Mammary epithelial cell (primary cell): ENCODE measurements at regions of chr5 and their contacts with region 1.

Region 1: DNA sequence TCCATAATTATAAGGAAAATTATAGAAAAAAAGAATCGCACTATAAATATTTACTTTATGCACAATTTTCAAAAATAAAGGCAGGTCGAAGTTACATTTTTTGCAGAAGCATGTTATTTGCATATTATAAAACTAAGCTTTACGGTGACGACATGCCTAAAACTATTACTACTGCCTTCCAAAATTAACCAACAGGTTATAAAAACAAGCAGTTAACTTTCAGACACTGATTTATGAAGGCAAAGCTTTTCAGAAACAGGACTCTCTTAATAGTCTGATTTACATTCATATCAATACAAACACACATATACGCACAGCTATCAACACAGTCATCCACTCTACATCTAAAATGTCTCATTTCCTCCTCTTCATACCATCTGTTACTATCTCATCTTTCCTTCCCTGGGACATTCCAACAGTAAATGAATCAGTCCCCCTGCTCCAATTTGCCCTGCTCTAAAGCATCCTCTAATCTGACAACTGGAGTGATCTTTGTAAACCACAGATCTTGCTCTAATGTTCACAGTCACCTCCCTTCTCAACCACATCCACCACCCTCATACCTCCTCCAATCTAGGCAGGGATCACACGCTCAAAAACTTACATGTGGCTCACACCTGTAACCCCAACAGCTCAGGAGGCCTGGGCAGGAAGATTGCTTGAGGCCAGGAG is 21.6 kb downstream of the FBXW11 start:
- DNase-seq: peak; percentile 89
- H3K4me3 ChIP-seq: no peak overlapping the region
- H3K27ac ChIP-seq: no peak overlapping the region
- H3K4me1 ChIP-seq: peaks cover 11% of the 10 kb centered on the region
- H3K27me3 ChIP-seq: no peaks in the 10 kb centered on the region
- CTCF ChIP-seq: no peak

Region 2: GRCh38 chr5:171924493-171925122 is 60.3 kb before region 1 on chr5:
- CTCF ChIA-PET with region 1: no interaction called
- dilution Hi-C with region 1: loop called (anchors 5 kb)
- in situ Hi-C with region 1: no loop called
- intact Hi-C with region 1: no loop called
- DNase-seq: no peak
- H3K4me3 ChIP-seq: peak overlapping the region in 2 of 3 experiments; percentile 11
- H3K27ac ChIP-seq: no peak overlapping the region
- H3K4me1 ChIP-seq: peaks cover 11% of the 10 kb centered on the region
- H3K27me3 ChIP-seq: no peaks in the 10 kb centered on the region
- CTCF ChIP-seq: no peak

Region 3: GRCh38 chr5:171946000-171946774 is 38.7 kb before region 1 on chr5:
- CTCF ChIA-PET with region 1: no interaction called
- dilution Hi-C with region 1: no loop called
- in situ Hi-C with region 1: no loop called
- intact Hi-C with region 1: loop called (anchors 5 kb)
- DNase-seq: no peak
- H3K4me3 ChIP-seq: no peak overlapping the region
- H3K27ac ChIP-seq: no peak overlapping the region
- H3K4me1 ChIP-seq: peaks cover 18% of the 10 kb centered on the region
- H3K27me3 ChIP-seq: no peaks in the 10 kb centered on the region
- CTCF ChIP-seq: peak; percentile 16 to 20

Region 4: GRCh38 chr5:171961117-171961516 is 23.8 kb before region 1 on chr5:
- CTCF ChIA-PET with region 1: no interaction called
- dilution Hi-C with region 1: no loop called
- in situ Hi-C with region 1: no loop called
- intact Hi-C with region 1: no loop called
- DNase-seq: no peak
- H3K4me3 ChIP-seq: no peak overlapping the region
- H3K27ac ChIP-seq: no peak overlapping the region
- H3K4me1 ChIP-seq: peaks cover 8% of the 10 kb centered on the region
- H3K27me3 ChIP-seq: no peaks in the 10 kb centered on the region
- CTCF ChIP-seq: no peak

Region 5: GRCh38 chr5:172052450-172053236 is 67.8 kb after region 1 on chr5:
- CTCF ChIA-PET with region 1: no interaction called
- dilution Hi-C with region 1: loop called (anchors 5 kb)
- in situ Hi-C with region 1: no loop called
- intact Hi-C with region 1: no loop called
- DNase-seq: no peak
- H3K4me3 ChIP-seq: no peak overlapping the region
- H3K27ac ChIP-seq: no peak overlapping the region
- H3K4me1 ChIP-seq: no peaks in the 10 kb centered on the region
- H3K27me3 ChIP-seq: no peaks in the 10 kb centered on the region
- CTCF ChIP-seq: peak in 1 of 2 donors; percentile 10

Region 6: DNA sequence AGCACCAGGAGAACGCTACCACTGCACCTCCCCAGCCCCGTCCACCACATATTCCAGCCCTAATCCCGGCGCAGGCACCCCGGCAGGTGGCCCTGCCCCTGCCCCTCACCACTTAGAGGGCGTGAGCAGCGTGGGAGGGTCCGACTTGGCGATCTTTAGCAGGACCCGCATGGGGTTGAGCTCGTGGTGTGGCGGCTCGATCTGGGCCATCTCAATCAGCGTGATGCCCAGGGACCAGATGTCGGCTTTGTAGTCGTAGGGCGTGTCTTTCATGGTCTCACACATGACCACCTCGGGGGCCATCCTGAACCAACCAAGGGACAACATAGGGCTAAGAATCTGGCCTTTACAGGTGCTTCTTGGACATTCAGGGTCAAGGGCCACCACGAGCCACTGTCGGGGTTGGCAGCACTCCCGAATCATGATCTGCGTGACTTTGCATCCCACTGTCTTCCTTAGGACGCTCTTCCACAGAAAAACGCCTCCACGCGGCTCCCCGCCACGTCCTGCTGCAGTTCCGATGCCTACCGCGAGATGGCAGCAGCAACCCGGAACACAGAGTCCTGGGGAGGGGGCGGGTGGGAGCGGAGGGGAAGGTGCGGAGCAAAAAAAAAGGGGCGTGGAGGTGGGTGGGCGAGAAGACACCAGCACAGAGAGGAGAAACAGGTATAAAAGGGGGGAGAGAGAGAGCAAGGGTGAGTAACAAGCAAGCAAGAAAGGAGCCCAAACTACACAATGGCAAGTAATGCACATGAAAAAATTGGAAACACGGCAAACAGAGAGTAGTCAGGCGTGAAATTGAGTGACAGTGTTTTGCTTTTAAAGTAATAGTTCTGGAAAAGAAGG is 121.8 kb after region 1 on chr5:
- CTCF ChIA-PET with region 1: no interaction called
- dilution Hi-C with region 1: no loop called
- in situ Hi-C with region 1: no loop called
- intact Hi-C with region 1: no loop called
- DNase-seq: no peak
- H3K4me3 ChIP-seq: no peak overlapping the region
- H3K27ac ChIP-seq: peak overlapping the region; percentile 29
- H3K4me1 ChIP-seq: peaks cover 75% of the 10 kb centered on the region
- H3K27me3 ChIP-seq: no peaks in the 10 kb centered on the region
- CTCF ChIP-seq: peak; percentile 63 to 96